IMR-90 (cell line): ENCODE measurements at regions of chr1 and their contacts with region 1.

Region 1: GRCh38 chr1:92797961-92798360 is 13.1 kb upstream of the EVI5 start:
- DNase-seq: peak; percentile 86
- ATAC-seq: peak; percentile 79
- H3K4me3 ChIP-seq: no peak overlapping the region
- H3K27ac ChIP-seq: peak overlapping the region; percentile 45; the same call in 1 of the 2 replicates
- H3K4me1 ChIP-seq: peaks cover 9% of the 10 kb centered on the region; the same call in 1 of the 2 replicates
- H3K27me3 ChIP-seq: no peaks in the 10 kb centered on the region
- CTCF ChIP-seq: no peak
- POLR2A ChIP-seq: no peak
- RAD21 ChIP-seq: no peak

Region 2: DNA sequence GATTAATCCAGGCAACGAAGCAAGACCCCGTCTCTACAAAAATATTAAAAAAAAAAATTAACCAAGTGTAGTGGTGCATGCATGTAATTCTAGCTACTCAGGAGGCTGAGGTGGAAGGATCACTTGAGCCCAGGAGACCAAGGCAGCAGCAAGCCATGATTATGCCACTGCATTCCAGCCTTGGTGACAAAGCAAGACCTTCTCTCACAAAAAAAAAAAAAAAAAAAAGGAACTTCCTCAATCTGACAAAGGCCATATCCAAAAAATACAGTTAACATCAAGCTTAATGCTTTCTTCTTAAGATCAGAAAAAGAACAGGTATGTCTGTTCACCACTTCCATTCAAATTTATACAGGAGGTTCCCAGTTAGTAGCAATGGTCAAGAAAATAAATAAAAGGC is 67.5 kb before region 1 on chr1:
- CTCF ChIA-PET with region 1: no interaction called
- POLR2A ChIA-PET with region 1: interaction called, 16 read pairs
- dilution Hi-C with region 1: no loop called
- in situ Hi-C with region 1: no loop called
- intact Hi-C with region 1: no loop called
- DNase-seq: no peak
- ATAC-seq: no peak
- H3K4me3 ChIP-seq: no peak overlapping the region
- H3K27ac ChIP-seq: no peak overlapping the region
- H3K4me1 ChIP-seq: peaks cover 1% of the 10 kb centered on the region; the same call in 1 of the 2 replicates
- H3K27me3 ChIP-seq: no peaks in the 10 kb centered on the region
- CTCF ChIP-seq: no peak
- POLR2A ChIP-seq: no peak
- RAD21 ChIP-seq: no peak

Region 3: DNA sequence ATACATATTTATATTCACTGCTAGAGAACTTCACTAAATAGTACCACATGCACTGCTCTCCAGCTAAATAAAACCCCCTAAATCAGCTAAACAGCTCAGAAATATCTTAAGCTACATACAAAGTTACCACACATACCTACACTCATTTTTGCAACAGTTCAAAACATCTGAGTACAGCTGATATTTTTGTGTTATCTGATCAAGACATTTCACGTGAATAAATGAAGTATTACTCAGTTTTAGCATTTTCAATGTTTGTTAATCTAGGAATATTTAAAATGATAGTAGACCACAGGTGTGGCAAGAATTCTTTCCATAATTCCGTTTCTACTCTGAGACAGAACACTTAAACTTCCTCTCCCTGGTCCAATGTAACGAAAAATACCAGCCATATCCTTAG is 33.8 kb before region 1 on chr1:
- CTCF ChIA-PET with region 1: no interaction called
- POLR2A ChIA-PET with region 1: no interaction called
- dilution Hi-C with region 1: no loop called
- in situ Hi-C with region 1: no loop called
- intact Hi-C with region 1: no loop called
- DNase-seq: no peak
- ATAC-seq: no peak
- H3K4me3 ChIP-seq: no peak overlapping the region
- H3K27ac ChIP-seq: no peak overlapping the region
- H3K4me1 ChIP-seq: peaks cover 3% of the 10 kb centered on the region; the same call in 1 of the 2 replicates
- H3K27me3 ChIP-seq: no peaks in the 10 kb centered on the region
- CTCF ChIP-seq: no peak
- POLR2A ChIP-seq: no peak
- RAD21 ChIP-seq: no peak

Region 4: GRCh38 chr1:92951141-92951582 is 153.2 kb after region 1 on chr1:
- CTCF ChIA-PET with region 1: no interaction called
- POLR2A ChIA-PET with region 1: no interaction called
- dilution Hi-C with region 1: no loop called
- in situ Hi-C with region 1: no loop called
- intact Hi-C with region 1: no loop called
- DNase-seq: peak; percentile 71
- ATAC-seq: peak; percentile 64
- H3K4me3 ChIP-seq: no peak overlapping the region; the same call in 1 of the 2 replicates
- H3K27ac ChIP-seq: peak overlapping the region; percentile 66
- H3K4me1 ChIP-seq: peaks cover 8% of the 10 kb centered on the region
- H3K27me3 ChIP-seq: no peaks in the 10 kb centered on the region
- CTCF ChIP-seq: no peak
- POLR2A ChIP-seq: no peak
- RAD21 ChIP-seq: no peak